ENCODE measurements at regions of chr5 and their contacts with region 1.

Region 1: GRCh38 chr5:59099270-59099994 is 516.6 kb downstream of the RAB3C start:
- DNase-seq: peak; percentile 89
- H3K4me3 Mint-ChIP-seq: peak overlapping the region; percentile 57
- H3K27ac Mint-ChIP-seq: peak overlapping the region; percentile 83
- H3K4me1 Mint-ChIP-seq: peaks cover 60% of the 10 kb centered on the region
- H3K27me3 Mint-ChIP-seq: no peaks in the 10 kb centered on the region

Region 2: DNA sequence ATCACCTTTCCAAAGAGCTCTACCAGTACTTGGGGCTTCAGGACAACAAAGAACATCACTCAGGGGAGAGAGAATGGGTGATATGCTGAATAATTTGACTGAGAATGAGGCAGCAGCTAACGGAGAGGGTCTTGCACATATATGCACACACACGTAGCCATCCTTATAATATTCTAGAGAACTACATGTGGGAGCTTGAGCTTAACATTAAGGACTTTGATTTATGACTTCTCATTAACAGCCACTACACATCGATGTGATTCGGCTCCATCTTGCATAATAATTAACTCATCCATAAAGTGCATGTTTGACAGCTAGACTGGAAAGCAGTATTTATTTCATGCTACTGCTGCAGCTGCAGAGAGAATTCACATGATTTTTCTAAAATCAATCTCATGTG is 353.1 kb before region 1 on chr5:
- intact Hi-C with region 1: no loop called
- DNase-seq: no peak
- H3K4me3 Mint-ChIP-seq: no peak overlapping the region
- H3K27ac Mint-ChIP-seq: no peak overlapping the region
- H3K4me1 Mint-ChIP-seq: no peaks in the 10 kb centered on the region
- H3K27me3 Mint-ChIP-seq: peaks cover 11% of the 10 kb centered on the region

Region 3: GRCh38 chr5:59020611-59021285 is 78.7 kb before region 1 on chr5:
- intact Hi-C with region 1: loop called (anchors 5 kb)
- DNase-seq: peak; percentile 66
- H3K4me3 Mint-ChIP-seq: peak overlapping the region; percentile 67
- H3K27ac Mint-ChIP-seq: peak overlapping the region; percentile 93
- H3K4me1 Mint-ChIP-seq: peaks cover 64% of the 10 kb centered on the region
- H3K27me3 Mint-ChIP-seq: no peaks in the 10 kb centered on the region

Region 4: DNA sequence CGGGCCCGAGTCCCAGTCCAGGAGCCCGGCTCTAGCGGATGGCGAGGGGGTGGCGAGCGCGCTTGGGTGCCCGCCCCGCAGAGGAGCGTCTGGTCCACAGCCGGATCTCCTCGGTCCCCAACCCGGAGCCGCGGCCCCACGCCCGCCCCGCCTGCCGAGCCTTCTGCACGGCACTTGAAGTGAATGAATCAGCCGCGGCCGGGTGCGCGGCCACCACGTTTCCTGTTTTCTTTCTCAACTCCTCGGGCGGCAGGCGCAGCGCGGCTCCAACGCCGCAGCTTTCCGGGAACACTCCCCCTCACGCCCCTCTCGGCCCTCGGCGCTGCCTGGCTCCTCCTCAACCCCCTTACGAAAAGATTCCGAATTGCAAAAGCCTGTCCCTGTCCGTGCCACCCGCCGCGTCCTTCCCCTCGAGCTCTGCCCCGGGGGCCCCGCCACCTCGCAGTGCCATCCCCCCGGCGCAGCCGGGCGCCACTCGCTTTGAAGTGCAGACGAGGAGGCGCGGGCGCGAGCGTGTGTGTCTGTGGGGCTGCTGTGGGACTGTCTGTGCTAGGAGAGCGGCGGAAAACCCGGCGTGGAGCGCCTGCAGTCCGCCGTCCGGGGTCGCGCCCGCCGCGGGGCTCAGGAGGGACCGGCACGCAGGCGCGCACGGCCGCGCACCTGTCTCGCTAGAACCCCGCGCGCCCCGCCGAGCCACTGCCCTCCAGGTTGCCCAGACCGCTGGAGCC is 60.0 kb before region 1 on chr5:
- intact Hi-C with region 1: loop called (anchors 1 kb)
- DNase-seq: peak; percentile 97
- H3K4me3 Mint-ChIP-seq: peak overlapping the region; percentile 92
- H3K27ac Mint-ChIP-seq: peak overlapping the region; percentile 99
- H3K4me1 Mint-ChIP-seq: peaks cover 48% of the 10 kb centered on the region
- H3K27me3 Mint-ChIP-seq: no peaks in the 10 kb centered on the region

Region 5: GRCh38 chr5:59126708-59127573 is 27.5 kb after region 1 on chr5:
- intact Hi-C with region 1: loop called (anchors 1 kb)
- DNase-seq: no peak
- H3K4me3 Mint-ChIP-seq: no peak overlapping the region
- H3K27ac Mint-ChIP-seq: no peak overlapping the region
- H3K4me1 Mint-ChIP-seq: peaks cover 22% of the 10 kb centered on the region
- H3K27me3 Mint-ChIP-seq: no peaks in the 10 kb centered on the region

Region 6: DNA sequence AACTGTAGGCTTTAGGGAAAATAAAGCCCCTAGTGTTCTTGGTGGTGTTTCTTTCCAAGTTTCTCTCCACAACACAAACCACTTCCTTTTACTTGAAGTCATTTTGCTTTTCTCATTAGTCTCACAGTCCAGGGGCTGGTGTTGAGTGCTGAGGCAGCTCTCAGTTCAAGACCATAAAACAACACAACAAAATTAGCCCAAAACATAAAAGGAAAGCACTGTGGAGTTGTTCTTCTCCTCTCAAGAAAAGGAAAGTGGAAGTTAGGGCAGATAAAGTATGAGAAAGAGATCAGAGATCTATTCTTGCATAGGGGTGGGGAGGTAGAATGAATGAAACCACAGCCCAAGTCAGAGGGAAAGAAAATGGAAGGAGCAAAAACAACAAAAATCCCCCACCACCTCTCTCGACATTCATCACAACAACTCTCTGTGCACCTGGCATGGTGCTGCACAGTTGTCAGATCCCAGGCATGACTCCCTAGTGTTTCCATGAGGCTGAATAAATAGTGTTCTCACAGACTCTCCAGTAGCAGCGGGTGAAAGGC is 53.3 kb after region 1 on chr5:
- intact Hi-C with region 1: loop called (anchors 1 kb)
- DNase-seq: peak; percentile 76
- H3K4me3 Mint-ChIP-seq: no peak overlapping the region
- H3K27ac Mint-ChIP-seq: no peak overlapping the region
- H3K4me1 Mint-ChIP-seq: peaks cover 3% of the 10 kb centered on the region
- H3K27me3 Mint-ChIP-seq: no peaks in the 10 kb centered on the region

Region 7: GRCh38 chr5:59174248-59174844 is 74.9 kb after region 1 on chr5:
- intact Hi-C with region 1: loop called (anchors 2 kb)
- DNase-seq: peak; percentile 81
- H3K4me3 Mint-ChIP-seq: peak overlapping the region; percentile 19
- H3K27ac Mint-ChIP-seq: no peak overlapping the region
- H3K4me1 Mint-ChIP-seq: peaks cover 33% of the 10 kb centered on the region
- H3K27me3 Mint-ChIP-seq: no peaks in the 10 kb centered on the region

Region 8: DNA sequence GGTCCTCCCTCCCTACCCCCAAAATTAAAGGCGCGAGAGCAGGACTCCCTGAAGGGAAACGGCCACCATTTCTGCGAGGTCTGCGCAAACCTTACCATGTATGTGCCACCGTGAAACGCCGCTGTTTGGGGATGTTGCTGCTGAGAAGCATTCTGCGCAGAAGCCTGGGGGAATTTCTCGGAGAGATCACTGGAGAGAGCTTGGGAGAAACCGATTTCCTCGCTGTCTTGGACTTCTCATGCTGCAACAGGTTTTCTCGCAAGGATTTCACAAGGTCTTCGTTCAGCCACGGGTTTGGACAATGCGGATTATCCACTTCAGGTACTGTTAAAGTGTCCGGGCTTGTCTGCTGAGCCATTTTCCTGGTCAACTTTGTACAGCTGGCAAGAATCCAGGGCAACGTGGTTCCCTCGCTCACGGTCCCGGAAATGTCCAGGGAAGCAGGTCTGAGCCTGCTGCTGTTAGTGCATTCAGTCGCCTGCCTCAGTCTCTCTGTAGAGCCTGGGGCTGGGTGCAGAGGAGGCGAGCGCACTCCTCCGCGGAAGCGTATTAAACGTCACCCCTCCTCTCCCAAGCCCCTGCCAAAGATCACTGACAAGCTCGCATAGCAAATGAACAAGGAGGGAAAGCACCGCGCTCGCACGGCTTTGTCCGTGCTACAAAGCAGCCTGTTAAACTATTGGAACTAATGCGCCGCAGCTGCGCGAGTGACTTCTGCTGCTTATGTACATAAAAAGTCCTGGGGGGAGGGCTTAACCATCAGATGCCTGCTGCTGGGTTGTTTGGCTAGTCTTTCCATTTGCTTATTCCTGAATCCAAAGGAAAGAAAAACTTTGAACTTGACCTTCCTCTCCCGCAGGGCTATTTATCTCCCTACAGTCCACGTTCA is 669.0 kb after region 1 on chr5:
- intact Hi-C with region 1: no loop called
- DNase-seq: peak; percentile 73
- H3K4me3 Mint-ChIP-seq: peak overlapping the region; percentile 80
- H3K27ac Mint-ChIP-seq: peak overlapping the region; percentile 75
- H3K4me1 Mint-ChIP-seq: peaks cover 21% of the 10 kb centered on the region
- H3K27me3 Mint-ChIP-seq: peaks cover 42% of the 10 kb centered on the region

Measured in activated CD4-positive, alpha-beta T cell treated with anti-CD3 and anti-CD28 coated beads, Interleukin-2, amount 10 ng/mL, durations not matched to agents 24 days and 14 days (primary cell).